OCI-LY7 (cell line): ENCODE measurements at regions of chr9 and their contacts with region 1.

Region 1: GRCh38 chr9:70324963-70325362 is 66.2 kb downstream of the SMC5 start:
- DNase-seq: no peak
- H3K4me3 ChIP-seq: no peak overlapping the region
- H3K27ac ChIP-seq: no peak overlapping the region
- H3K4me1 ChIP-seq: no peaks in the 10 kb centered on the region
- CTCF ChIP-seq: no peak

Region 2: GRCh38 chr9:69829484-69829883 is 495.5 kb before region 1 on chr9:
- CTCF ChIA-PET with region 1: no interaction called
- POLR2A ChIA-PET with region 1: no interaction called
- intact Hi-C with region 1: no loop called
- DNase-seq: no peak
- H3K4me3 ChIP-seq: no peak overlapping the region
- H3K27ac ChIP-seq: no peak overlapping the region
- H3K4me1 ChIP-seq: no peaks in the 10 kb centered on the region
- CTCF ChIP-seq: no peak

Region 3: DNA sequence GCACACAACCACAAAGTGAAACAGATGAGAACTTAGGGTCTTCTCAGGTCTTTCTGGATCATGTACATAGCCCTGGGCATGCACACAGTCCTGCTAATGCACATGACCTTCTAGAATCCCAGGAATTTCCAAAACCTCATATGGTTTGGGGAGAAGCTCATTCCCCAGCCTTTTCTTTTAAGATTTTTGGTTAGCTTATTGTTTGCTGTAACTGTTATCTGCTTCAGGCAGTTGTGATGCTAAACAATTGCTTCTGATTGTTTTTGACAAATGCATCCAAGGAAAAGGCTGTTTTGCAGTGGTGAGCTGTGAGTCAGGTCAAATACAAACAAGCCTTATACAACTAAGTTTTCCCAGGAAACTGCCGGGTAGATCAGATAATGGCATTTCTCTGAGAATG is 33.5 kb before region 1 on chr9:
- CTCF ChIA-PET with region 1: no interaction called
- POLR2A ChIA-PET with region 1: no interaction called
- intact Hi-C with region 1: loop called (anchors 5 kb)
- DNase-seq: no peak
- H3K4me3 ChIP-seq: no peak overlapping the region
- H3K27ac ChIP-seq: no peak overlapping the region
- H3K4me1 ChIP-seq: no peaks in the 10 kb centered on the region
- CTCF ChIP-seq: no peak